Activated CD4-positive, alpha-beta T cell treated with anti-CD3 and anti-CD28 coated beads for 36 hours (primary cell): ENCODE measurements at regions of chr21 and their contacts with region 1.

Region 1: GRCh38 chr21:35051287-35051818 is 2.3 kb upstream of the RUNX1 start:
- DNase-seq: peak; percentile 91
- ATAC-seq: peak; percentile 52
- H3K4me3 Mint-ChIP-seq: peak overlapping the region; percentile 87
- H3K27ac Mint-ChIP-seq: peak overlapping the region; percentile 95
- H3K4me1 Mint-ChIP-seq: peaks cover 49% of the 10 kb centered on the region
- H3K27me3 Mint-ChIP-seq: no peaks in the 10 kb centered on the region

Region 2: DNA sequence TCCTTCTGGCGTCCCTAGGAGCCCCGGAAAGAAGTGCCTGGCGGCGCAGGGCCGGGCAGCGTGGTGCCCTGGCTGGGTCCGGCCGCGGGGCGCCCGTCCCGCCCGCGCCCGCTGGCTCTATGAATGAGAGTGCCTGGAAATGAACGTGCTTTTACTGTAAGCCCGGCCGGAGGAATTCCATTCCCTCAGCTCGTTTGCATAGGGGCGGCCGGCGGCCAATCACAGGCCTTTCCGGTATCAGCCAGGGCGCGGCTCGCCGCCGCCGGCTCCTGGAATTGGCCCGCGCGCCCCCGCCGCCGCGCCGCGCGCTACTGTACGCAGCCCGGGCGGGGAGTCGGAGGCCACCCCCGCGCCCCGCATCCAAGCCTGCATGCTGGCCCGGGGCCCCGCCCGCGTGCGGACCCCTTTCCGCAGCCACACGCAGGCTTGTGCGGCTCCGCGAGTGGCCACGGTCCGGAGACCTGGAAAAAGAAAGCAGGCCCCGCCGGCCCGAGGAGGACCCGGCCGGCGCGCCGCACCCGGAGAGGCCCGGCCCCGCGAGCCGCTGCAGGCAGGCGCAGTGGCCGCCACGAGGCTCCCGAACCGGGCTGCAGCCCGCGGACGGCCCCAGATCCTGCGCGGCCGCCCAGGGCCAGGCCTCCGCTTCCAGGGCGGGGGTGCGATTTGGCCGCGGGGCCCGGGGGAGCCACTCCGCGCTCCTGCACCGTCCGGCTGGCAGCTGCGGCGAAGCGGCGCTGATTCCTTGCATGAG is 162.6 kb before region 1 on chr21:
- CTCF ChIA-PET with region 1: interaction called, 13 read pairs
- POLR2A ChIA-PET with region 1: interaction called, 104 read pairs
- intact Hi-C with region 1: loop called (anchors 1 kb)
- DNase-seq: peak; percentile 93
- ATAC-seq: peak; percentile 56
- H3K4me3 Mint-ChIP-seq: peak overlapping the region; percentile 92
- H3K27ac Mint-ChIP-seq: peak overlapping the region; percentile 100
- H3K4me1 Mint-ChIP-seq: peaks cover 37% of the 10 kb centered on the region
- H3K27me3 Mint-ChIP-seq: no peaks in the 10 kb centered on the region

Region 3: DNA sequence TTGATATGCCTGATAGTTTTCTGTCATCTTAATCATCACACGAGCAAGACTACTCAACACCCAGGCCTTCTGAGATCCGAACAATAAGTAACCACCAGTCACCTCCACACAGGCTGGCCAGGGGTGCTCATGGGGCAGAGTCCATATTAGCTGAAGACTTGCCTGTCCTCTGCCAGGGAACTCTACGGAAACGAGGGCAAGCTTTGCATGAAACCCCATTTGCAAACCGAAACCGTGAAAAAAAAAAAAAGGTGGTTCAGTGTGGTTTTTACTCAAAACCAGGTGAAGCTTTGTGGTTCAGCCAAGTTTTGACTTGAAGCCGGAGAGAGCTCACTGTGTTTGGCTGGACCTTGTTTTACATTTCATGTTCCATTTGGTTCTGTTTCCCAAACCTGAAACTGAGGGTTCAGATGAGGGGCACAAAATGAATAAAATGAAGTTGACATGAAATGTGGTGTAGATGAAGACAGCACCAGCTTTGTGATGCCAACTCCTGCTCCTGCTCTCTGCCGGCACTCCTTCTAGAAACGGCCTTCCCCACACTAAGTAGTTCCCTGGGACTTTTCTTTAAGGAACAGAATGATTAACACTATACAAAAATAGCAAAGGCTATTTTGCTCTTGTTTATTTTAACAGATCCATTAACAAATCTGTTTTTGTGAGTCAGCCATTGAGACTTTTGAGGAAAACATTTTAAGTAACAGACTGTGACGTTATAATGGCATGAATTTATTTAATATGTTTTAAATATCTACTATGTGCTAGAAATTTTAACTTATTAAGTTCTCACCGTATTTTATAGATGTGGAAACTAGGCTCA is 77.0 kb before region 1 on chr21:
- CTCF ChIA-PET with region 1: interaction called, 5 read pairs
- POLR2A ChIA-PET with region 1: interaction called, 10 read pairs
- intact Hi-C with region 1: loop called in 1 of 2 experiments (anchors 1 kb)
- DNase-seq: peak; percentile 68
- ATAC-seq: peak; percentile 85
- H3K4me3 Mint-ChIP-seq: peak overlapping the region; percentile 65
- H3K27ac Mint-ChIP-seq: peak overlapping the region; percentile 72
- H3K4me1 Mint-ChIP-seq: peaks cover 84% of the 10 kb centered on the region
- H3K27me3 Mint-ChIP-seq: peaks cover 3% of the 10 kb centered on the region

Region 4: GRCh38 chr21:35036465-35037383 is 14.6 kb before region 1 on chr21:
- CTCF ChIA-PET with region 1: interaction called, 8 read pairs
- POLR2A ChIA-PET with region 1: interaction called, 13 read pairs
- intact Hi-C with region 1: no loop called
- DNase-seq: no peak
- ATAC-seq: peak; percentile 51
- H3K4me3 Mint-ChIP-seq: peak overlapping the region; percentile 59
- H3K27ac Mint-ChIP-seq: peak overlapping the region; percentile 94
- H3K4me1 Mint-ChIP-seq: peaks cover 96% of the 10 kb centered on the region
- H3K27me3 Mint-ChIP-seq: no peaks in the 10 kb centered on the region

Region 5: DNA sequence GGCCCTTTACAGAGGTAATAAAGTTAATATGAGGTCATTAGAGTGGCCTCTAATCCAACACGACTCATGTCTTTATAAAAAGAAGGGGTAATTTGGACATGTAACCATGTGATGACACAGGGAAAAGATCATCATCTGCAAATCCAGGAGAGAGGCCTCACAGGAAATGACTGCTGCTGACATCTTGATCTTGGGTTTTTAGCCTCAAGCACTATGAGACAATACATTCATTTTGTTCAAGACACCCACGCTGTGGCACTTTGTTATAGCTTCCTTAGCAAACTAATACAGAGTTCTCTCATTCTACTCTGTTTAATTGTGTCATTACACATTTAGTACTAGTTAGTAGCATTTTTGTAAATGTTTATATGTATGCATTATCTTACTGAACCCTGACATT is 61.7 kb after region 1 on chr21:
- CTCF ChIA-PET with region 1: no interaction called
- POLR2A ChIA-PET with region 1: no interaction called
- intact Hi-C with region 1: no loop called
- DNase-seq: peak; percentile 38
- ATAC-seq: peak; percentile 88
- H3K4me3 Mint-ChIP-seq: no peak overlapping the region
- H3K27ac Mint-ChIP-seq: peak overlapping the region; percentile 34
- H3K4me1 Mint-ChIP-seq: peaks cover 15% of the 10 kb centered on the region
- H3K27me3 Mint-ChIP-seq: no peaks in the 10 kb centered on the region

Region 6: DNA sequence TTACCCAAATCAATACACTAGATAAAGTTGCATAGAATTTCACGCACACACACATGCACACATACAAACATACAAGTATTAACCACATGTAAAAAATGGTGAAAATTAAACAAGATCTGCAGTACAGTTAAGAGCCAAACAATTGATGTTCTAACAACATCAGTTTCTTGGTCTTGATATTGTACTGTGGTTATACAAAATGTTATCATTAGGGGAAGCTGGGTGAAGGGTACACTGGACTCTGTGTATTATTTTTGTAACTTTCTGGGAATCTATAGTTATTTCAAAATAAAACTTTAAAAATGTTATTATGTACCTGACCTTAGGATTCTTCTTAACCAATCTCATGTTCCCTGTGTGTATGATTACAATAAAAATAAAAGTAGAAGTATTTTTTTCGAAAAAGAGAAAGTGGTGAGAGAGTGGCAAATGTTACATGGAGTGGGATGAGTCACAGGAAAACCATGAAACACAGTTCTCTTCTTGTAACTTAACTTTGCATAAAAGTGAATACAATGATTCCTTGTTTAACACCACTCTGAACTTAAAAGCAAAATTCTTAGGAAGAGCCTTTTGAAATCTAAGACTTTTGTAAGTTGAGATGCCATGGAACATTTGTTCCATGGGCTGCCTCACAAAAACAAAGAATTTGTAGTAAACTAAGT is 99.3 kb after region 1 on chr21:
- CTCF ChIA-PET with region 1: no interaction called
- POLR2A ChIA-PET with region 1: interaction called, 7 read pairs
- intact Hi-C with region 1: loop called in 1 of 2 experiments (anchors 5 kb)
- DNase-seq: no peak
- ATAC-seq: peak; percentile 72
- H3K4me3 Mint-ChIP-seq: peak overlapping the region; percentile 18
- H3K27ac Mint-ChIP-seq: peak overlapping the region; percentile 90
- H3K4me1 Mint-ChIP-seq: peaks cover 63% of the 10 kb centered on the region
- H3K27me3 Mint-ChIP-seq: no peaks in the 10 kb centered on the region

Region 7: GRCh38 chr21:35400233-35400957 is 349.0 kb after region 1 on chr21:
- CTCF ChIA-PET with region 1: interaction called, 17 read pairs
- POLR2A ChIA-PET with region 1: interaction called, 6 read pairs
- intact Hi-C with region 1: loop called (anchors 1 kb)
- DNase-seq: peak; percentile 42
- ATAC-seq: peak; percentile 89
- H3K4me3 Mint-ChIP-seq: peak overlapping the region; percentile 33
- H3K27ac Mint-ChIP-seq: peak overlapping the region; percentile 82
- H3K4me1 Mint-ChIP-seq: peaks cover 28% of the 10 kb centered on the region
- H3K27me3 Mint-ChIP-seq: peaks cover 2% of the 10 kb centered on the region